ENCODE measurements at regions of chr1 and their contacts with region 1.

Region 1: GRCh38 chr1:229900220-229900619 is 166.8 kb upstream of the GALNT2 start:
- DNase-seq: no peak
- H3K4me3 ChIP-seq: no peak overlapping the region
- H3K4me3 Mint-ChIP-seq: no peak overlapping the region
- H3K27ac ChIP-seq: no peak overlapping the region
- H3K27ac Mint-ChIP-seq: no peak overlapping the region
- H3K4me1 ChIP-seq: no peaks in the 10 kb centered on the region
- H3K4me1 Mint-ChIP-seq: no peaks in the 10 kb centered on the region
- H3K27me3 ChIP-seq: no peaks in the 10 kb centered on the region
- H3K27me3 Mint-ChIP-seq: peaks cover 10 to 24% of the 10 kb centered on the region in 2 donors

Region 2: DNA sequence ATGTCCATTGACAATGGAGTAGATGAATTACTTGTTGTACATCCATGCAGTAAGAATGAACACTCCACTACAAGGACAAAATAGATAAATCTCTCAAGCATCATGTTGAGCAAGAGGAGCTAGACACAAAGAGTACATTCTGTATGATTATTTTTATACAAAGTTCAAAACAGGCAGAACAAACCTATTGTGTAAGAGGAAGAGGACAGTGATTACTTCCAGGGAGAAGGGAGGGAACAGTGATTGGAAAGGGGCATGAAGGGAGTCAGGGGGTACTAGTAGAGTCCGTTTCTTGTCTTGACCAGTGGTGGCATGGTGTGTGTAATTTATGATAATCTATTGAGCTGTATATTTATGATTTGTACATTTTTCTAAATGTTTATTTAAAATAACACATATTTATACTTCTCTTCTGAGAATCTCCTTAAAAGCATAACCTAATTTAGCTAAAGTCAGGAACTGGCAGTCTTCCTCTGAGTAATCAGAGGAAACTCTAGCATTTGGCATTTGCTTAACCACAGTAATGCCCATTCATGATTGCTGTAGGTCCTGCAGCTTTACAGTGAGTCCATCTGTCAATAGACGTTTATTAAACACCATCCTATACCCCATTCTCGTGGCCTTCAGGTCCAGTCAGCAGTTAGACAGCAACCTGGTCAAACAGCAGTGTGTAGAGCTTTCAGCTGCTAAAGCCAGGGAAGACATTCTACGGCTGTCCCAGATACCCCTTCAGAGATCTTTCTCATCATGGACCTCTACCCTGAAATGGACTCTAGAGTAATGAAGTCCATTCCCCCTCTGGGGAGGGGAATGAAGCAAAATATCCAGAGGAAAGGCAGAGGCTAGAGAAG is 52.7 kb after region 1 on chr1:
- CTCF ChIA-PET with region 1: no interaction called
- POLR2A ChIA-PET with region 1: no interaction called
- intact Hi-C with region 1: loop called (anchors 5 kb)
- DNase-seq: no peak
- H3K4me3 ChIP-seq: no peak overlapping the region
- H3K4me3 Mint-ChIP-seq: peak overlapping the region in 3 of 8 donors; percentile 12 to 34 (median 19)
- H3K27ac ChIP-seq: no peak overlapping the region
- H3K27ac Mint-ChIP-seq: peak overlapping the region in 1 of 7 donors; percentile 72
- H3K4me1 ChIP-seq: no peaks in the 10 kb centered on the region
- H3K4me1 Mint-ChIP-seq: peaks cover 0 to 13% (median 8%) of the 10 kb centered on the region in 4 donors
- H3K27me3 ChIP-seq: no peaks in the 10 kb centered on the region
- H3K27me3 Mint-ChIP-seq: peaks cover 5 to 8% of the 10 kb centered on the region in 2 donors

Measured in CD4-positive, alpha-beta memory T cell (primary cell).